ENCODE measurements at regions of chr10 and their contacts with region 1.

Region 1: DNA sequence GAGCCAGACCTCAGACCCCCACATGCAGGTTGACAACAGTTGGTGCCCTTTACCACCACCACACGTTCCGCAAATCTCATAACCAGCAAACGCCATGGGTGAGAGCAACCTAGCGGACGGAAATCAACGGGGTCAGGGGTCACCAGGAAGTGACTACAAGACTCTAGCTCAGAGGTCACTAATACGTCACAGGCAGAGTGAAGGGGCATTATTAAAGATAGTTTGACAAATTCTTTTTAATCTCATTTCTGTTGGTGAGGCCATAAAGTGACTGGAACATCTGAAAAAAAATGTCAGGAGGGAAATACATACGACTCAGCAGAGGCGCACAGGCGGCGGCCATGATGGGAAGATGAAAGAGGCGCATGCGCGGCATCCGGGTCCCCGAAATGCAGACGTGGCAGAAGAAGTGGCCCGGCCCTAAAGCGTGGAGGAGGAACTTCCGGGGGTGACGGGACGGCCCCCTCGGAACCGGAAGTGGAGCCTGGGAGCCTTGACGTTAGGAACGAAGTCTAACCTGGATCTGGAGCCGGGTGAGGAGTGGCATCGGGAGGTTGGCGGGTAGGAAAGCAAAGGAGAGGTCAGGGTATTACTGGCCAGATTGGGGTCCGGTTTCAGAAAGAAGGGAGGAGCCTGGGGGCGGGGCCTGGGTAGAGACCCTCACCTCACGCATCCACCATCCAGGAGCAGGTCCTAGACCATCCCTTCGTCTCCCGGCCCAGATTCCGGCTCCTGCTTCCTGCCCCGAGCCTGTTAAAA is at the start of gene SEC24C:
- DNase-seq: peak; percentile 98
- H3K4me3 Mint-ChIP-seq: peak within 1 kb of the TSS; percentile 97
- H3K27ac Mint-ChIP-seq: peak within 1 kb of the TSS; percentile 100
- H3K4me1 Mint-ChIP-seq: peaks cover 32% of the 10 kb centered on the region
- H3K27me3 Mint-ChIP-seq: no peaks in the 10 kb centered on the region
- total RNA-seq, gene SEC24C: 106 TPM in 2 replicates

Region 2: DNA sequence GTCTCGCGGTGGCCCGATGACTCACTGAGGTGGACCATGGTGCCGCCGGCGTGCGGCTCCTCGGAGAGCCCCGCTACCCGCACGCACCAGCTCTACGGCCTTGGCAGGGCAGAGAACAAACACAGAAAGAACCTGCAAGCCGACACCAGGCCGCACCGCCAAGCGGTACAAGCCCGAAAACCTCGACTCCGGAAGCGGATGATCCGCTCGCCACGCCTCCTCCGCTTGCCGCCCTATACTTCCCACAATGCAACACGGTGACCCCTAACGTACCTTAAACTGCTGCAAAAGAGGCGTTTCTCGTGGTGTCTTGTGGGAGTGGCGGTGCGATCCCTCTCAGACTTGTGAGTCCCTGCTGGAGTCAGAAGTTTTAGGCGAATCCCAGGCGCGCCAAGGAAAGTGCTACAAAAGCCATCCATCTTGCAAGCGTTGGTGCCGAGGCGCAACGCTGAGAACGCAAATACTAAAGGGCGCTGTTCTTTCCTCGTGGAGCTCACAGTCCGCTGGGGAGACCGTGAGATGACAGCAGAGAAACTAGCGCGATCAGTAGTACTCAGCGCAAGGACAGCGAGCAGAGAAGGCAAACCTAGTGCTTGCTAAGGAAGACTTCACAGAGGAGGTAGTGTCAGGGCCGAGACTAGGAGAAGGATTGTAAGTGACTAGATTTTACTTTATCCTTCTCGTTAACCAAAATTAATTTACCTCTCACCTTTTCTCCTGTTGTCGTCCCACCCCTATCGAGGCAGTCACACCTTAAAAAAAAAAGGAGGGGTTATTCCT is 491.4 kb before region 1 on chr10 and contains the start of gene MRPS16:
- intact Hi-C with region 1: loop called (anchors 5 kb)
- DNase-seq: peak; percentile 98
- H3K4me3 Mint-ChIP-seq: peak within 1 kb of the TSS; percentile 94
- H3K27ac Mint-ChIP-seq: peak within 1 kb of the TSS; percentile 96
- H3K4me1 Mint-ChIP-seq: peaks cover 34% of the 10 kb centered on the region
- H3K27me3 Mint-ChIP-seq: no peaks in the 10 kb centered on the region
- total RNA-seq, gene MRPS16: 164 TPM in 2 replicates

Region 3: DNA sequence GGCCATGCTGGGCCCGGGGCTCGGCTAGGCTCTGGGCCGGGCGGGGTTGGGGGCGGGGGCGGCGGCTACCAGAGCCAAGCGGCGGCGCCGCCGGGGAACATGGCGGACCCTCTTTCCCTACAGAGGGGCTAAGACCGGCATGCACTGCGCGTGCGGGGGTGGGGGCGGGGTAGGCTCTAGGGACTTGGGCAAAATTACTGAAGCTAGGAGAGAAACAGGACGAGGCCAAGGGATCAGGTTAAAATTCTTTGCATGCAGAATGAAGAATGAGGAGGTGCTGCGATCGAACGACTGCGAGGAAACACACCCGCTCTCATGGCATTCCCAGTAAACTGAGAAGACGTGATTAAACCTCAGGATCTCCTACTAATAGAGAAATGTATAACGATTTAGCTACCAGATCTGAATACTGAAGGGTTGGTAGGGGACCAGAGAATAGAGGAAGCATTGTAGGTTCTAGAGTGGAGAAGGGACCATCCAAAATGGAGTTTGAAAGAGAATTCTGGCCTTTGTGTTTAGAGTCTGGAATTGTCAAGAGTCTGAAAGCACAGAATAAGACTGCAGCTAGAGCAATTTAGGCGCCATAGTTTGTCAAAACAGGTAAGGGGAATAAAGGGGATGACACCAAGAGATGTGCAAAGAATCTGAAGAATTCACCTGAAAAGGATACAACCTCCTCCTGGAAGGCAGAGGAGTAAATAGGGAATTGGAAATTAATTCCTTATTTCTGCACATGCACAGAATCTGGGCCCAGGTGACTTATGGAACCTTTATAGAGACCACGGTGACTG is 248.0 kb before region 1 on chr10 and contains the start of gene PPP3CB:
- intact Hi-C with region 1: loop called (anchors 1 kb)
- DNase-seq: peak; percentile 93
- H3K4me3 Mint-ChIP-seq: peak within 1 kb of the TSS; percentile 99
- H3K27ac Mint-ChIP-seq: peak within 1 kb of the TSS; percentile 99
- H3K4me1 Mint-ChIP-seq: peaks cover 38% of the 10 kb centered on the region
- H3K27me3 Mint-ChIP-seq: no peaks in the 10 kb centered on the region
- total RNA-seq, gene PPP3CB: 42.5 and 43.6 TPM in 2 replicates

Region 4: GRCh38 chr10:73730153-73730906 is 13.8 kb before region 1 on chr10:
- intact Hi-C with region 1: loop called (anchors 1 kb)
- DNase-seq: peak; percentile 99
- H3K4me3 Mint-ChIP-seq: peak overlapping the region; percentile 100
- H3K27ac Mint-ChIP-seq: peak overlapping the region; percentile 99
- H3K4me1 Mint-ChIP-seq: peaks cover 4% of the 10 kb centered on the region
- H3K27me3 Mint-ChIP-seq: no peaks in the 10 kb centered on the region

Region 5: GRCh38 chr10:73772280-73773151 is 28.4 kb after region 1 on chr10:
- intact Hi-C with region 1: loop called (anchors 1 kb)
- DNase-seq: peak; percentile 96
- H3K4me3 Mint-ChIP-seq: peak overlapping the region; percentile 86
- H3K27ac Mint-ChIP-seq: peak overlapping the region; percentile 95
- H3K4me1 Mint-ChIP-seq: peaks cover 59% of the 10 kb centered on the region
- H3K27me3 Mint-ChIP-seq: no peaks in the 10 kb centered on the region

Region 6: DNA sequence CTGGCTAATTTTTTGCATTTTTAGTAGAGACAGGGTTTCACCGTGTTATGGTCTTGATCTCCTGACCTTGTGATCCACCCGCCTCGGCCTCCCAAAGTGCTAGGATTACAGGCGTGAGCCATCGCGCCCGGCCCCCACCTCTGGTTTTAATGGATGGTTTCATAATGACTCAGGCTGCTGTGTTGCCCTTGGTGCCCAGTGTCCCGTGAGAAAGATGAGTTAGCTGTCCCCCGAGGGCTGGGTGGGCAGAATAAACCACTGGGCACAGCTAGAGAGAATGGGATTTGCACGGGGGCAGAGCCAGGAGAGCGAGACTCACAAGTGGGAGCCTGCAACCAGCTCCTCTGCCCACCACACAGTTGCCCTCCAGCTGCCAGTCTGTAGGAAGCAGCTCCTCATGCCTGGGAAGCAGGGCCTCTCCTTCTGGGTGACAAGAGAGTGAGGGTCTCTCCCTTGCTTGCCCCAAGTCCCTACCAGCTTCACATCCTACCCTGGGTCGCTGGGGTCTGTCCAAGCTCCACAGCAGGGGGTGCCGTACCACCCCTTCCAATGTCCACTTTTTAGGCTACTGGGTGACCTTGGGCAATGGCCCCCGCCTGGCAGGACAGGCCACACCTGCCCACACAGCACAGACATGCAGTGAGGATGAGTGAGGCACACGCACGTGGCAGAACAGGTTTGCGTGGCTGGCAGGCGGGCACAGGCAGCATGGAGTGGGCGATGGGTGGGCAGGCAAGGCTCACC is 83.4 kb after region 1 on chr10:
- intact Hi-C with region 1: no loop called
- DNase-seq: no peak
- H3K4me3 Mint-ChIP-seq: no peak overlapping the region
- H3K27ac Mint-ChIP-seq: no peak overlapping the region
- H3K4me1 Mint-ChIP-seq: no peaks in the 10 kb centered on the region
- H3K27me3 Mint-ChIP-seq: no peaks in the 10 kb centered on the region